Right lobe of liver (tissue), 6 donors: ENCODE measurements at regions of chr20 and their contacts with region 1.

Region 1: DNA sequence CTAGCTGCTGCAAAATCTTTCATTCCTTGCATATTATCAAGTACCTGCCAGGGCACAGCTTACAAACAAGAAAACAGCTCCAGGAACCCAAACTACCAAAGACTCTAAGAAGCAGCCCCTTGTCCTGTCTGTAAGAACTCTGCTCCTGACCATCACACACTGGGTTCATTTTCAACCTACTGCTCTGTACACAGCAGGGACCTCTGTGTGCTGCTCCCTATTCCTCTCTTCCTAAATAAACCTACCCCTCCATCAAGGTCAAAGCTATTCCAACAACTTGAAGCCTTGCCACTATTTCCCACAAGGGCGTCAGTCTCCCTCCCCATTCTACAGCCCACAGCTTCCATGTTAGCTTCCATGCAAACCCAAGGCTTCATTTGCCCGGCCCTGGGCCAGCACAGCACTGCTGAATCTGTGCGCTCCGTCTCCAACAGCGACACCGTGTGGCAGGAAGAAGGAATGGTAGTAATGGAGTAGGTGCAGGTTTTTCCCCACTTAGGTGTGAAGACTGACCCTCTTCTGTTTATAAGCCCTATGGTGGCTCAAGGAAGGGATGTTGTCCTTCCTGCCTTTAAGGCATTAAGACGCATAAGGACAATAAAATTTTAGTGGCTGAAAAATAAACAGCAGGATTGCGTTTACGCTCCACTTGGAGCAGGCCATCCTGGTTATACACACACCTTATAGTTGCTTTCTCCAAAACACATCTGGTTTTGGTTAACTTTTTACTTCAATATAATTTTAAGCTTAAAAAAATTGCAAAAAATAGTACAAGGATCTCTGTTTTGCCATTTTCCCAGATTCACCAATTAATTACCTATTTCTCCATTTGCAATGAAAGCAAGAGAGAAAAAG is 115.2 kb upstream of the NXT1 start:
- DNase-seq: peak; percentile 59 to 77 (median 67)
- ATAC-seq: peak; percentile 83 to 91 (median 88)
- H3K4me3 ChIP-seq: no peak overlapping the region
- H3K27ac ChIP-seq: no peak overlapping the region
- H3K4me1 ChIP-seq: no peaks in the 10 kb centered on the region
- H3K27me3 ChIP-seq: no peaks in the 10 kb centered on the region
- CTCF ChIP-seq: peak; percentile 54 to 78 (median 69)
- POLR2A ChIP-seq: no peak

Region 2: DNA sequence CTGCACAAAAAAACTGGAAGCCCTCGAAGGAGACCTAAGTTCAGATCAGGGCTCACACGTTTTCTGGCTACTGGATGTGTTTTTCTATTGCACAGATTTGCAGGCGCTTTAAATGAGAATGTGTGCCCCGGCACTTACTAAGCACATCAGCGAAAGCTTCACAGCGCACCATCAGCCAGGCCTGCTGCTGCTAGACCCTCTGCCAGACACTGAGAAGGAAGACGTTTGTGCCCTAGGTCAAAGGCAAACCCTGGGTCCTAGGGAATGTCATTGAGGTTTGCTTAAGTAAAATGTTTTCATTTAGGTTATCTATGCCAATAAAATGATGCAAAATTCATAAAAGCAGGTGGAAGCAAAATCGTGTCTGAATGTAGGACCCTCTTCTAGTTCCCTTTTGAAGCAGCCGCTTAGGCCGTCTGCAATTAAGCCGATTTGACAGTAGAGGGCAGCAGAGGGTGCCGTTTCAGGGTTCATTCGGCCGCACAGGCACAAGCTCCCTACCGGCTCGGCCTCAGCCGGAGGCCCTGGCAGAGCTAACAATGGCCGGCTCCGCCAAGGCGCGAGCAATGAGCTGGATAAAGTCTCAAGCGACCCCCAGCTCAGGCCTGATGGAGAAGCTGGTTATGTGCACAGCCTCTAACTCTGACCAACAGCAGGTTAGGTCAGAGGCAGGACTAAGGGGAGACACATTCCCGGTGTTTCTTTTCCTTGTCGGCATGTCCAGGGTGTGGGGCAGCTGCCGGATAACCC is 543.9 kb before region 1 on chr20:
- intact Hi-C with region 1: loop called in 1 of 2 experiments (anchors 10 kb)
- DNase-seq: peak; percentile 79 to 81 (median 79)
- ATAC-seq: peak; percentile 95 to 98 (median 96)
- H3K4me3 ChIP-seq: no peak overlapping the region
- H3K27ac ChIP-seq: no peak overlapping the region
- H3K4me1 ChIP-seq: peaks cover 0 to 11% (median 4%) of the 10 kb centered on the region in 4 donors
- H3K27me3 ChIP-seq: no peaks in the 10 kb centered on the region
- CTCF ChIP-seq: peak; percentile 88 to 94 (median 90)
- POLR2A ChIP-seq: no peak